Astrocyte of the cerebellum (primary cell): ENCODE measurements at regions of chr11 and their contacts with region 1.

Region 1: DNA sequence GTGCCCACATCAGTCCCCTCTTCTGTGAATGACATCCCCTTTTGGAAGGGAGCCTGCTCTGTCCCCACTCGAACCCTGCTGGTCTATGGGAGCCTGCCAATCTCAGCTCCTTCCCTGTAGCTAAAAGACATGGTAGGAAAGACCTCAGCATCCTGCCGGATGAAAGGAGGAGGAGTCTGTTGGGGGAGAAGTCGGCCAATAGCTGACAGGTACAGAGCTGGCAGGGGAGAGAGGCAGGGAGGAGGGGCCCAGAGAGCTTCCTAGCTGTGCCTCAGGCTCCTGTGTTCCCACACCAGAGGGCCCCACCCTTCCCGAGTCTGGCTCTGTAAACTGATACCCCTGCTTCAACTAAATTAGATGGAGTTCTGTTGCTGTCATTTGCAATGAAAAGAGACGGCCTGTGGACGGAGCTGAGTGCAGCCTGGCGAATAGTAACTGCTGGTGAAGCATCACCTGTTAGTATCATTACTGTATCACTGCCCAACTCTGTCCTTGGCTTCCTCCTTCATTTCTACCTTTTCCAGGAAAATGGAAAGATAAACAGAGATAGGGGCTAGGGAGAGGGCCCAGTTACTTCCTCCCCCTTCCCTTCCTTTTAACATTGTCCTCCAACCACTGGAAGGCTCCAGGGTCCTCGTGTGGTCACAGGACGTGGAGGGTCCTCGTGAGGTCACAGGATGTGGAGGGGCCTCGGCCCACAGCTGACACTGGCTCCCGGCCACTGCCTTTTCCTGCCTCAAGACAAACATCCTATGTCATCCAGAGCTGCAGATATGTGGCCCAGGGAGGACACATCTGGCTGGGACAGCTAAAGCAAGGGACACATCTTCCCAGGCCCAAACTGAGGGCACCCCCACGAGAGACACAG is 15.1 kb downstream of the FXYD6 start:
- DNase-seq: no peak
- H3K4me3 ChIP-seq: no peak overlapping the region
- CTCF ChIP-seq: no peak

Region 2: GRCh38 chr11:117807482-117808327 is 53.7 kb before region 1 on chr11:
- in situ Hi-C with region 1: no loop called
- DNase-seq: peak; percentile 45
- H3K4me3 ChIP-seq: no peak overlapping the region
- CTCF ChIP-seq: peak; percentile 97

Region 3: GRCh38 chr11:117907251-117907981 is 46.0 kb after region 1 on chr11:
- in situ Hi-C with region 1: no loop called
- DNase-seq: peak; percentile 78
- H3K4me3 ChIP-seq: no peak overlapping the region
- CTCF ChIP-seq: no peak

Region 4: GRCh38 chr11:117934526-117935307 is 73.3 kb after region 1 on chr11:
- in situ Hi-C with region 1: loop called (anchors 5 kb)
- DNase-seq: no peak
- H3K4me3 ChIP-seq: no peak overlapping the region
- CTCF ChIP-seq: no peak